Activated CD4-positive, alpha-beta memory T cell treated with anti-CD3 and anti-CD28 coated beads for 36 hours (primary cell): ENCODE measurements at regions of chr1 and their contacts with region 1.

Region 1: DNA sequence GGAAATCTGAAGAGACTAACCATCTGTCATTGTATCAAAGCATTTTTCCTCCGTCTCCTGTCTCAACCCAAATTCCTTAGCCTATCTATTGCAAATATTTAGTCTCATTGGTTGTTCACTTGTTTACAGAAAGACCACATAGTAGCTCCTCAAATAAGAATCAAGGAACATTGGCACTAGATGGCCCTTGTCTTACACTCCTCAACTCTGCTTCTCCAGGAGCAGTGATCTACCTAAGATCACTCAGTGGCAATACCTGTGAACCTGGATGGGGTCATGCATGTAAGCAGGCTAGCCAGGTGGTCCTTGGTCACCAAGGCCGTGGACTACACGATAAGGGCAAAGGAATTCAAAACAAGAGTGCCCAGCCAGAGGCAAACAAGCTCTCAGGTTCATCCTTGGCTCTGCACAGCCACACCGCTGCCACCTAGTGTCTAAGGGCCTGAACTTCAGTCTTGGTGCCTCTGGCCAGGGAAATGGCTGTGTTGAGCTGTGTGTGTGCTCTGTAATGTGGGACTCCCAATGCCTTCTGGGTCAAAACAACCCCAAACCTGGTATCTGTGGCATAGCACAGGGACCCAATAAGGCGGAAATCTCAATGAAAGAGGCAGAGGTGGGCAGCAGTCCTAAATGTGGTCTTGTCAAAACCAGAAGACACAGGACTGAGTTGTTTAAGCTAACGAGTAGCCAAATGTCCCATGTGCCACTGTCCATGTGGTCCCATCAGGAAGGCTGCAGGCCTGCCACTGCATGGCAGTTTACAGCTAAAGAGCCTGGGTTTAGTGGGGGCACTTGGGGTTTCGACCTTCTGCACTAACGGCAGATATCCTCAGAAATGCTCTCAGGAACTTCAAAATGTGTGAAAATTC is 54.5 kb downstream of the GPR161 start:
- DNase-seq: peak; percentile 82
- H3K4me3 Mint-ChIP-seq: no peak overlapping the region
- H3K27ac Mint-ChIP-seq: no peak overlapping the region
- H3K4me1 Mint-ChIP-seq: no peaks in the 10 kb centered on the region
- H3K27me3 Mint-ChIP-seq: no peaks in the 10 kb centered on the region

Region 2: DNA sequence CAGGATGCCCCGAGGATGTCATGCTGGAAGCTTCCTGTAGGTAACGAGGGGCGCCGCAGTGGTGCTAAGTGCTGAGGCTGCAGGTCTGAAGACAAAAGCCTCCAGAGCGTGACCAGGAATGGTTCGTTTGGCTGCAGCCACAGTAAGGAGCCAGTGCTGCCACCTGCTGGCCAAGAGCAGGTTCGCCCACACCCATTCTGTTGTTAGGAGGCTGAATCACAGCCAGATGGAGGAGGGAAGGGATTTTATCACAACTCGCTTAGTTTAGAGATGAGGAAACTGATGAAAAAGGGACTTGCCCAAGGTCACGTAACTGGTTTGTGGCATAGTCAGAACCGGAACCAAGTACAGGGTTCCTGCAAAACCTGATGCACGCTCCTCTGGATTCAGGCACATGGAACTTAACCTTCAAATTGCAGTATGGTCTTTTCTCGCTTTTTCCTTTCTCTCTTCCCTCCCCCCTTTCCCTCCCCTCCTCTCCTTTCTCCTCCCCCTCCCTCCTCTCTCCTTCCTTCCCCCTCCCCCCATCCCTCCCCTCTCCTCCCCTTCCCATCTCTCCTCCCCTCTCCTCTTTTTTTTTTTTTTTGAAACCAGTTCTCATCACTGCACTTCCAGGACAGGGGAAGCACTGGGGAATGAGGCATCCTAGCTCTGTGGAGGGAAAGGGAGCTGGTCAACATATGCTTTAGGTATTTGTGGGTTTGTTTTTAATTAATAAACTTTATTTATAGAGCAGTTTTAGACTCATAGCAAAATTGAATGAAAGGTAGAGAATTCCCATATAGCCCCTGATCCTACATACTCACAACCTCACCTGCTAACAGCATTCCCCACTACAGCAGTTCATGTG is 278.7 kb before region 1 on chr1:
- CTCF ChIA-PET with region 1: interaction called, 5 read pairs
- POLR2A ChIA-PET with region 1: no interaction called
- intact Hi-C with region 1: loop called (anchors 5 kb)
- DNase-seq: peak; percentile 95
- H3K4me3 Mint-ChIP-seq: peak overlapping the region; percentile 57
- H3K27ac Mint-ChIP-seq: peak overlapping the region; percentile 90
- H3K4me1 Mint-ChIP-seq: peaks cover 26% of the 10 kb centered on the region
- H3K27me3 Mint-ChIP-seq: no peaks in the 10 kb centered on the region

Region 3: DNA sequence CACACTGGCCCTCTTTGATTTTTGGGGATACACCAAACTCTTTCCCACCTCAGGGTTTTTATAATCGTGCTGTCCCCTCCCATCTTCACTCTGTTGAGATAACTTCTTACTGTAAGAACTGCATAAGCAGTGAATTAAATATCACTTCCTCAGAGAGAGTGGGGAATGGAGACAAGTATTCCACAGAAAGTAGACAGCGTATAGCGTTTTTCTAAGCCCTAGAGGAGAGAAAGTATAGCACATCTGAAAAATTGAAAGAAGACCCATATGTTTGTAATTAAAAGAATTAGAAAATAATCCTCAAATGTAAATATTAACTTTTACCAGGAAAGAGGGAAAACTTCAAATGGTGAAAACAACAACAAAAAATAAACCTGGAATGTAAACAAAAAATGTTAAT is 12.9 kb before region 1 on chr1:
- CTCF ChIA-PET with region 1: interaction called, 20 read pairs
- POLR2A ChIA-PET with region 1: no interaction called
- intact Hi-C with region 1: no loop called
- DNase-seq: no peak
- H3K4me3 Mint-ChIP-seq: no peak overlapping the region
- H3K27ac Mint-ChIP-seq: no peak overlapping the region
- H3K4me1 Mint-ChIP-seq: no peaks in the 10 kb centered on the region
- H3K27me3 Mint-ChIP-seq: no peaks in the 10 kb centered on the region

Region 4: GRCh38 chr1:168145184-168146159 is 63.2 kb after region 1 on chr1:
- CTCF ChIA-PET with region 1: interaction called, 46 read pairs
- POLR2A ChIA-PET with region 1: no interaction called
- intact Hi-C with region 1: loop called (anchors 2 kb)
- DNase-seq: peak; percentile 91
- H3K4me3 Mint-ChIP-seq: no peak overlapping the region
- H3K27ac Mint-ChIP-seq: no peak overlapping the region
- H3K4me1 Mint-ChIP-seq: peaks cover 13% of the 10 kb centered on the region
- H3K27me3 Mint-ChIP-seq: no peaks in the 10 kb centered on the region

Region 5: GRCh38 chr1:168266644-168267186 is 184.5 kb after region 1 on chr1:
- CTCF ChIA-PET with region 1: no interaction called
- POLR2A ChIA-PET with region 1: no interaction called
- intact Hi-C with region 1: no loop called
- DNase-seq: no peak
- H3K4me3 Mint-ChIP-seq: no peak overlapping the region
- H3K27ac Mint-ChIP-seq: no peak overlapping the region
- H3K4me1 Mint-ChIP-seq: peaks cover under 1% of the 10 kb centered on the region
- H3K27me3 Mint-ChIP-seq: no peaks in the 10 kb centered on the region